Natural killer cell (primary cell): ENCODE measurements at regions of chr7 and their contacts with region 1.

Region 1: GRCh38 chr7:93133005-93133404 is 15.2 kb downstream of the SAMD9L start:
- DNase-seq: no peak
- ATAC-seq: no peak
- H3K4me3 ChIP-seq: no peak overlapping the region
- H3K4me3 Mint-ChIP-seq: no peak overlapping the region
- H3K27ac ChIP-seq: no peak overlapping the region
- H3K27ac Mint-ChIP-seq: no peak overlapping the region
- H3K4me1 ChIP-seq: no peaks in the 10 kb centered on the region
- H3K4me1 Mint-ChIP-seq: peaks cover 0 to 12% of the 10 kb centered on the region in 2 donors
- H3K27me3 ChIP-seq: no peaks in the 10 kb centered on the region
- H3K27me3 Mint-ChIP-seq: no peaks in the 10 kb centered on the region
- CTCF ChIP-seq: no peak

Region 2: DNA sequence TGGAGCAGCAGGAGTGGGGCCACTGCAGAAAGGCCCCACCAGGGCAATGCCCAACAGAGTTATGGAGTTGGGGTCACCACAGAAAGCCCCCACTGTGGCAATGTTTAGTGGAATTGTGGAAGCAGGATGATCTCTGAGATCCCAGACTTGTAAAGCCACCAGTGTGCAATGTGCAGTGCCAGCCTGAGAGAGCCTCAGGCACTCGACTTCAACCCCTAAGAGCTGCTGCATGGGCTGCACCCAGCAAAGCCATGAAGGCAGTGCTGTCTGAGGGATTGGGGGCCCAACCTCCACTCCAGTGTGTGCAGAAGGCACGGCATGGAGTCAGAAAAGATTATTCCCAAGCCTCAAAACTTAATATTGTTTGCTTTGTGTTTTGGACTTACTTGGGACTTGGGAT is 35.6 kb before region 1 on chr7:
- intact Hi-C with region 1: loop called (anchors 5 kb)
- DNase-seq: no peak
- ATAC-seq: no peak
- H3K4me3 ChIP-seq: no peak overlapping the region
- H3K4me3 Mint-ChIP-seq: no peak overlapping the region
- H3K27ac ChIP-seq: no peak overlapping the region
- H3K27ac Mint-ChIP-seq: no peak overlapping the region
- H3K4me1 ChIP-seq: no peaks in the 10 kb centered on the region
- H3K4me1 Mint-ChIP-seq: peaks cover 0 to 1% of the 10 kb centered on the region in 2 donors
- H3K27me3 ChIP-seq: no peaks in the 10 kb centered on the region
- H3K27me3 Mint-ChIP-seq: no peaks in the 10 kb centered on the region
- CTCF ChIP-seq: no peak